ENCODE measurements at regions of chr2 and their contacts with region 1.

Region 1: GRCh38 chr2:105982402-105982801 is 211.7 kb downstream of the UXS1 start:
- DNase-seq: no peak
- ATAC-seq: no peak
- H3K4me3 Mint-ChIP-seq: no peak overlapping the region
- H3K27ac Mint-ChIP-seq: no peak overlapping the region
- H3K4me1 Mint-ChIP-seq: peaks cover 19% of the 10 kb centered on the region
- H3K27me3 Mint-ChIP-seq: no peaks in the 10 kb centered on the region

Region 2: DNA sequence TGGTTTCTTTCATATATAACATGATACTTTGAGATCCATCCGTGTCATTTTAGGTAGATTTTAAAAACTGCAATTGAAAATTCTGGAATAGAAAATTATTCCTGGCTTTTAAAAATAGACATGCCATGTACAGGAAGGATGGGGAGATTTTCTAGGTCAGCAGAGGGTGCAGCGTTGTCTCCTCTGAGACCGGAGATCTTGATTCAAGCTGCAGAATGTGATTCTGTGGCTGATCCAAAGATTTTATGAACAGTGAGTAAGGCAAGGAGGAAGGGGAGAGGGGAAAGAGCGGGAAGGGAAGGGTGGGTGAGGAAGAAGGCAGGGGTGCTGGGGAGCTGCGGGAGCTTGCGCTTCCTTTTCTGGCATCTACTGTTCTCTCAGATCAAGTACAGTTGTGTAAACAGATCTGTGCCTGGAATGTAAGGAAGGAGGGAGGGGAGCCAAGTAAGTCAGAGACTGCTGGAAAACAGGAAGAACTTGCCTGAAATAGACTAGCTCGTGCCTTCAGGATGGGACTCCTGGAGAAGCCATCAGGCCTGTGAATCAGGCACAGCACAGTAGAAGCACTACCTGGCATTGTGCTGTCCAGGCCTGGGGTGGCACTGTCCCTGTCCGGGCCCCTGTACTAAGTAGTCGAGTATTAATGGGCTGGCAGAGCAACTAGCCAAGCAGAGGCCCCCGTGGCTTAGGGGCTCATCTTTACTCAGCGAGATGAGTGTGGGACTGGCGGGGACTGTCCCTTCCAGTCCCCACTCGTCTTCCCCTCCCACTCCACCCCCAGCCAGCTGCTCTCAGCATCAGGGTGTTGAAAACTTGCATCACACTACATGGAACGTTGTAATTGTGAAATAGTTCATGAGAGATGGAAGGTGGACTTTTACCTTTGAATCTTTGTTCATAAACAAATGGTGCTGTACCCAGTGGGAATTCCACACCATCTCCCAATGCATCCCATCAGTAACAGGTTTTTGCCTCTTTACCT is 48.2 kb after region 1 on chr2:
- CTCF ChIA-PET with region 1: no interaction called
- POLR2A ChIA-PET with region 1: no interaction called
- intact Hi-C with region 1: loop called in 1 of 2 experiments (anchors 1 kb)
- DNase-seq: peak; percentile 78
- ATAC-seq: peak; percentile 93
- H3K4me3 Mint-ChIP-seq: no peak overlapping the region
- H3K27ac Mint-ChIP-seq: peak overlapping the region; percentile 52
- H3K4me1 Mint-ChIP-seq: peaks cover 34% of the 10 kb centered on the region
- H3K27me3 Mint-ChIP-seq: no peaks in the 10 kb centered on the region